SK-MEL-5 (cell line): ENCODE measurements at regions of chr12 and their contacts with region 1.

Region 1: DNA sequence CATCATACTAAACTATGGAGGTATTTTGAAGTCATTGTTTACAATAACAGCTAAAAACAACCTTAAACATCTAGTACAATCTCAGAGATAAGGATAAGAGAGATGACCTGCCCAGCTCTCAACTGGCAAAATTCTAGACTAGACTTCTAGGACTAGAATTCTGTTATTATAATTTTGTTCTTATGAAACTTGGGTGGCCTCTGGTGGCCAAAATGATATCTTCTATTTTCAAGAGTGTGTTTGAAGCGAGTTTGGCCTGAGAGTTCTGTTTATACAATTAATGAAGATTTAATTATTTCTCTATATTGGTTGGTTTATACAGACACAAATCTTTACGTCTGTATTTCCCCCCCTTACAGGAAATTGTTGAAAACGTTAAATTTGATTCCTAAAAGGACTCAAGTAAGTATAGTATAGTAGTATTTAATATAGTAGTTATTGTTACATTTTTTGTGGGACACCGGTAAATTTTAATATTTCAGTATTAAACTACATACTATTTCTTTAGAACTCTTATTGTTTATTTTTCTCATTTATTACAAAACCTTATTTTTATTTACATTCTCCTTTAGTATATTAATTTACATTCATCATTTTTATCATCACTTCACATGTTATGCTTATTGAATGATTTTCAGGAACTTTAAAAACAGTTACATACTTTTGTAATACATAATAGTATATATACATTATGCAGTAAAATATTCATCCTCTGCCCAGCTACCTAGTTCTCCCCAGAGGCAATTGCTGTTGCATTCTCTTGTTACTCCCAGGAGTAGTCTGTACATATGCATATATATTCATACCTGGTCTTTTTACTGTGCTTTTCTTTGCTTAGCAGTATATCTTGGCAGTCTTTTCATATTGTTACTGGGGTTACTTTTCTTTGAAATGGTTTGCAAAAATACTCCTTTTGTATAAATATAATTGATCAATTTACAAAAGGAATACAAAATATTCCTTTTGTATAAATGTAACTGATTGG is 6.6 kb downstream of the PPHLN1 start:
- DNase-seq: peak; percentile 70

Region 2: GRCh38 chr12:42129595-42130204 is 202.9 kb before region 1 on chr12:
- in situ Hi-C with region 1: loop called (anchors 10 kb)
- DNase-seq: peak; percentile 82

Region 3: GRCh38 chr12:42589465-42590329 is 257.1 kb after region 1 on chr12 and contains the start of gene PRICKLE1:
- in situ Hi-C with region 1: no loop called
- DNase-seq: peak; percentile 40
- total RNA-seq, gene PRICKLE1: 0.50 and 4.4 TPM in 2 replicates